ENCODE measurements at regions of chr1 and their contacts with region 1.

Region 1: GRCh38 chr1:21659099-21659923 is 9.8 kb downstream of the RAP1GAP start:
- DNase-seq: peak; percentile 71 to 90 (median 86)
- ATAC-seq: peak; percentile 82 to 87
- H3K4me3 ChIP-seq: no peak overlapping the region
- H3K27ac ChIP-seq: no peak overlapping the region
- H3K4me1 ChIP-seq: peaks cover 3% of the 10 kb centered on the region
- H3K27me3 ChIP-seq: no peaks in the 10 kb centered on the region

Region 2: DNA sequence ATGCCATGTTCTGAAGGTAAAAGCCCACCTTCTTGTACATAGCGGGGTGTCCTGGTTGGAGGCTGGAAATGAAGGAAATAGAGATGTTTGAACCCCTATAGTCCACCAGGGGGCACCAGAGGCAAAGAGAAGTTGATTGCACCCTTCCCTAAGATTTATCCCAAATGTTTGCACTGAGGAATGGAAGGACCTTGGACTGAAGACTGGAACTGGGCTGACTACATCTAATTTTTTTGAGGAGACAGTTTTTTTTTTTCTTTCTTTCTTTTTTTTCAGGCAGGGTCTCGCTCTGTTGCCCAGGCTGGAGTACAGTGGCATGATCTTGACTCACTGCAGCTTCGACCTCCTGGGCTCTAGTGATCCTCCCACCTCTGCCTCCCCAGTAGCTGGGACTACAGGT is 427.3 kb before region 1 on chr1:
- intact Hi-C with region 1: loop called in 2 of 4 experiments (anchors 10 kb)
- DNase-seq: peak in 2 of 3 donors; percentile 26 to 34
- ATAC-seq: peak; percentile 53 to 67
- H3K4me3 ChIP-seq: no peak overlapping the region
- H3K27ac ChIP-seq: no peak overlapping the region
- H3K4me1 ChIP-seq: no peaks in the 10 kb centered on the region
- H3K27me3 ChIP-seq: no peaks in the 10 kb centered on the region

Region 3: GRCh38 chr1:21244986-21245687 is 414.2 kb before region 1 on chr1:
- intact Hi-C with region 1: loop called in 1 of 4 experiments (anchors 10 kb)
- DNase-seq: peak in 2 of 3 donors; percentile 39 to 43
- ATAC-seq: no peak
- H3K4me3 ChIP-seq: no peak overlapping the region
- H3K27ac ChIP-seq: no peak overlapping the region
- H3K4me1 ChIP-seq: no peaks in the 10 kb centered on the region
- H3K27me3 ChIP-seq: no peaks in the 10 kb centered on the region

Region 4: DNA sequence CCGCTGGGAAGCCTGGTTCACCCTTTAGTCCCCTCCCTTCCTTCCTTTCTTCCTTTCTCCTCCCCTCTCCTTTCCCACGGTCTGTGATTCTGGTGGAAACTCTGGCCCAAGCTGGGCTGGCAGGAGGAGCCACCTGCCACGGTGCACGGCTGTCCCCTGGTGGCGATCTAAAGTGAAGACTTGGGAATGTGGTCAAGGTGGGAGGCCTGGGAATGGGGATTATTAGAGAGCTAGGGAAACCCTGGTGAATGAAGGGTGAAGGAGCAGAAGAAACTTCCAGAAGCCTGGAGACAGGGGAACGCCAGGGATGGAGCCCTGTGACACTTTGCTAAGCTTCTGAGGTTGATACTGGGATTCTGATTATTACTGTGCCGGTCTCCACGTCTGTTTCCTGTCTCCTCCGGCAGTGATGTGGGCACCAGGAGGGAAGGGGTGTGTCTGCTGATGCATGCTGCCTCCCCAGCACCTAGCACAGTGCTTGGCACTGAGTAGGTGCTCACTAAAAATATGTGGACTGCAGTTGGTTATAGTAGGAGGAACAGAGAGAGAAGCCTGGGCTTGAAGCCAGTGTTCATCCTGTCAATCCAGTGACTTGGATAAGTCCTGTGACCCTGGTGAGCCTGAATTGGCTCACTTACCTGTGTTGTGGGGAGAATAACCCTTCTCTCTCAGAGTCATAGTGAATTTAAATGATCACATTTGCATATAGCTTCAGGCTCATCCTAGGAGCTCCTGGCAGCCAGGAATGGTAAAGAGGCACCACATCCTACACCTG is 290.6 kb before region 1 on chr1:
- intact Hi-C with region 1: loop called in 2 of 4 experiments (anchors 5 to 10 kb)
- DNase-seq: peak; percentile 84 to 92 (median 91)
- ATAC-seq: peak; percentile 94 to 96
- H3K4me3 ChIP-seq: no peak overlapping the region
- H3K27ac ChIP-seq: no peak overlapping the region
- H3K4me1 ChIP-seq: no peaks in the 10 kb centered on the region
- H3K27me3 ChIP-seq: no peaks in the 10 kb centered on the region

Region 5: GRCh38 chr1:21378705-21379494 is 280.4 kb before region 1 on chr1:
- intact Hi-C with region 1: loop called in 2 of 4 experiments (anchors 5 to 10 kb)
- DNase-seq: no peak
- ATAC-seq: no peak
- H3K4me3 ChIP-seq: no peak overlapping the region
- H3K27ac ChIP-seq: no peak overlapping the region
- H3K4me1 ChIP-seq: no peaks in the 10 kb centered on the region
- H3K27me3 ChIP-seq: no peaks in the 10 kb centered on the region

Region 6: GRCh38 chr1:21508580-21509350 is 150.5 kb before region 1 on chr1:
- intact Hi-C with region 1: loop called in 3 of 4 experiments (anchors 2 to 10 kb)
- DNase-seq: peak; percentile 79 to 93 (median 89)
- ATAC-seq: peak; percentile 81 to 84
- H3K4me3 ChIP-seq: peak overlapping the region; percentile 43
- H3K27ac ChIP-seq: no peak overlapping the region
- H3K4me1 ChIP-seq: peaks cover 8% of the 10 kb centered on the region
- H3K27me3 ChIP-seq: no peaks in the 10 kb centered on the region

Region 7: GRCh38 chr1:21517161-21517589 is 142.1 kb before region 1 on chr1:
- intact Hi-C with region 1: loop called in 3 of 4 experiments (anchors 5 to 10 kb)
- DNase-seq: no peak
- ATAC-seq: no peak
- H3K4me3 ChIP-seq: no peak overlapping the region
- H3K27ac ChIP-seq: no peak overlapping the region
- H3K4me1 ChIP-seq: no peaks in the 10 kb centered on the region
- H3K27me3 ChIP-seq: no peaks in the 10 kb centered on the region

Region 8: DNA sequence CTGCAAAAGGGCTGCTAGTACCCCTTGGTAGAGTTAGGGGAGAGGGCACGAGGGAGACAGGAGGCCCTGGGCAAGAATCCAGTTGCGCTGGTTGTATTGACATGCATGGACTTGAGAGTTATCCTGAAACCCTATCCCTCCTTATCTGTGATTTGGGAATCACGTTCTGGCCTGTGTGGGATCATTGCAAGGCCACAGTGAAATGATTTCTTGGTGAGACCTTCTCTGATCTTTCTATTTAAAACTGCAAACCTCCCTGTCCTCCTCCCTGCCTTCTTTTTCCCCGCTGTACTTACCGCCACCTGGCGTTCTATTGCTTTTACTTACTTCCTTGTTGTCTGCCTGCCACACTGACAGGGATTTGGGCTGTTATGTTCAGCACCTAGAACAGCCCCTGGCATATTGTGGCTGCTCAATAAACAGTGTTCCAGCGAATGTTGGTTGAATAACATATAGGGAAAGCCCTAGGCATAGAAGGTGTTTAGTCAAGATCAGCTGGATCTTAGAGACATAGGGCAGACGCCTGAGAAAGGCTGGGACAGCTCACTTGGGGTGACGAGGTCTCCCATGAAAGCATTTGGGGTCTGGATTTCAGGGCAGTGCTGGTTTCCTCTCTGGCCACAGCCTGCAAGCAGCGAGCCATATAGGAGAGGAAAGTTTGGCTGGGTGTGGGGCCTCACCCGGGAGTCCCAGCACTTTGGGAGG is 124.5 kb before region 1 on chr1:
- intact Hi-C with region 1: no loop called
- DNase-seq: no peak
- ATAC-seq: peak in 1 of 2 donors; percentile 6
- H3K4me3 ChIP-seq: no peak overlapping the region
- H3K27ac ChIP-seq: peak overlapping the region; percentile 6
- H3K4me1 ChIP-seq: peaks cover 15% of the 10 kb centered on the region
- H3K27me3 ChIP-seq: no peaks in the 10 kb centered on the region

Region 9: GRCh38 chr1:21721295-21721985 is 62.1 kb after region 1 on chr1:
- intact Hi-C with region 1: no loop called
- DNase-seq: no peak
- ATAC-seq: no peak
- H3K4me3 ChIP-seq: no peak overlapping the region
- H3K27ac ChIP-seq: no peak overlapping the region
- H3K4me1 ChIP-seq: no peaks in the 10 kb centered on the region
- H3K27me3 ChIP-seq: no peaks in the 10 kb centered on the region